ENCODE measurements at regions of chr10 and their contacts with region 1.

Region 1: DNA sequence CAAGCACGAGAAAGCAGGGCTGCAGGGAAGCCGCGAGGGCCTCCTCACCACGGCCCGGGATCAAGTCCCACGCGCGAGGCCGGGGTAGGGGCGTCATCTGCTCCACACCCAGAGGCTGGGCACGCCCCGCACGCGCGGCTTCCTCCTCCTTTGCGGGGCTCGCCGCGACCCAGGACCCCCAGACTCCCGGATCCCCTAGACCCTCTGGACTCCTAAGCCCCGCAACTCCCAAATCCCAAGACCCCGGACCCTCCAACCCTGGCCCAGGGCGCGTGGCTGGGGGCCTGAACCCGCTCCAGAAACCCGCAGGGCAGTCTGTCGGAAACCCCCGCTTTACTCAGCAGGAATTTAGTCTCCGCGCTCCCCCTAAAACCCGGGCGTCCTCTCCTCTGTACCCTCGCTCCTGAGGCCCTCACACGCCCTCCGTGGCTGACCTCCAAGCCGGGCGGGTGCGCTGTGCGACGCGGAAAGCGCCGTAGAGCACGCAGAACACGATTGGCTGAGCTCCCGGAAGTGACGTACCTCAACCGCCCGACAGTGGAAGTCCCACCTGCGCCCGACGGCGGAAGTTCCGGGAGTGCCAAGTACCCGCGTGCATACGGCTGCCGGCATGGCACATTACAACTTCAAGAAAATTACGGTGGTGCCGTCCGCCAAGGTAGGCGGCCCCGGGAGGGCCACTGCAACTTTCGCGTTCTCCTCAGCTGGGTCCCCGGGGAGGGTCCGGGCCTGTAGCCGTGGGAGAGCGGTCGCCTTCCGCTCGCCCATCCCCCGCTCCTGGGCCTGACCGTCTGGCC is at the start of gene GTPBP4:
- DNase-seq: peak; percentile 96 to 98 (median 98)
- H3K4me3 ChIP-seq: peak within 1 kb of the TSS; percentile 85 to 98 (median 90)
- H3K4me3 Mint-ChIP-seq: peak within 1 kb of the TSS; percentile 84 to 90
- H3K27ac ChIP-seq: peak within 1 kb of the TSS; percentile 75 to 97
- H3K27ac Mint-ChIP-seq: peak within 1 kb of the TSS; percentile 91 to 96 (median 92)
- H3K4me1 ChIP-seq: peaks cover 22 to 29% of the 10 kb centered on the region in 2 donors
- H3K4me1 Mint-ChIP-seq: peaks cover 27% of the 10 kb centered on the region
- H3K27me3 ChIP-seq: no peaks in the 10 kb centered on the region
- H3K27me3 Mint-ChIP-seq: peaks cover 0 to 2% (median 0%) of the 10 kb centered on the region in 3 donors
- CTCF ChIP-seq: peak; percentile 11
- polyA plus RNA-seq, gene GTPBP4: 9.9 to 16.1 (median 12.2) TPM

Region 2: DNA sequence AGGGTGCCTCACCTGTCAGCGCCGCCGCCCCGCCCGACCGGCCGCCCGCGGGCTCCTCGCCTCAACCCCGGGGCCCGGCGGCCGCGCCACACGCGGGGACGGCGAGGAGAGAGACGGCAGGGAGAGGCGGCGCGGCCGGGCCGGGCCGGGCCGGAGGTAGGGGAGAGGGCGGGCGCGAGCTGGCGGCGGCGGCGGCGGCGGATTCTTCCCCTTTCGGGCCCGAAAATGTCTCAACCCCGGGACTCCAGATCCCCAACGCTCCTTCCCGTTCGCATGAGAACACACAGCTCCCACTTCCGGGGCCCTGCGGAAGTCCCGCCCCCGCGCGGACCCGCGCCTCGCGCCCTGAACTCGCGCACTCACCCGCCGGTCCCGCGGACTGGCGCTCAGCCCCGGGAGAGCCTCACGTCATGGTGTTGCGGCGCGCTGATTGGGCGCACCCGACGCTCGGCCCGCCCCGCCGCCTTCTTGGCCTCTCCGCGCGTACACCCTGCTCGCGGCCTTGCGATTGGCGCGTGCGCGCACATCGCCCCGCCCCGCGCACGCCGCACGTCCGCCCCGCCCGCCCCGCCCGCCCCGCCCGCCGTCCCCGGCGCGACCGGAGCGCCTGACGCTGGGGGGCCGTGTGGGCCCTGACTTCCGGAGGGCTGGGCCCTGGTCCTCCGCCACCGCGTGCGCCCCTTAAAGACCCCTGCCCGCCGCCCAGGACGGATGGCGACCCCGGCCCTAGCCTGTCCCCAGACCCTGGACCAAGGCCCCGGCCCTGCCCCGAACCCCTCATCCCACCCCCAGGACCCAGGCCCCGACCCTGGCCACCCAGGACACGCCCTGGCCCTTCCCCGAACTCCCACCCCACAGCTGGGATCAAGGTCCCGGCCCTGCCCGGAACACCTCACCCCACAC is 56.4 kb before region 1 on chr10 and contains the start of gene LARP4B:
- intact Hi-C with region 1: loop called (anchors 2 to 5 kb)
- DNase-seq: peak; percentile 98 to 99 (median 99)
- H3K4me3 ChIP-seq: peak within 1 kb of the TSS; percentile 87 to 99 (median 90)
- H3K4me3 Mint-ChIP-seq: peak within 1 kb of the TSS; percentile 91 to 98
- H3K27ac ChIP-seq: peak within 1 kb of the TSS; percentile 91 to 97
- H3K27ac Mint-ChIP-seq: peak within 1 kb of the TSS; percentile 95 to 97 (median 96)
- H3K4me1 ChIP-seq: peaks cover 23% of the 10 kb centered on the region in 2 donors
- H3K4me1 Mint-ChIP-seq: peaks cover 32% of the 10 kb centered on the region
- H3K27me3 ChIP-seq: no peaks in the 10 kb centered on the region
- H3K27me3 Mint-ChIP-seq: peaks cover 0 to 3% (median 2%) of the 10 kb centered on the region in 3 donors
- CTCF ChIP-seq: no peak
- polyA plus RNA-seq, gene LARP4B: 17.2 to 52.3 (median 33.0) TPM

Region 3: GRCh38 chr10:1043532-1043995 is 55.5 kb after region 1 on chr10:
- intact Hi-C with region 1: loop called in 1 of 2 experiments (anchors 5 kb)
- DNase-seq: peak; percentile 61 to 65 (median 63)
- H3K4me3 ChIP-seq: peak overlapping the region; percentile 30 to 94 (median 78)
- H3K4me3 Mint-ChIP-seq: peak overlapping the region; percentile 86 to 97
- H3K27ac ChIP-seq: peak overlapping the region; percentile 71 to 86
- H3K27ac Mint-ChIP-seq: peak overlapping the region; percentile 94 to 99 (median 99)
- H3K4me1 ChIP-seq: peaks cover 37 to 56% of the 10 kb centered on the region in 2 donors
- H3K4me1 Mint-ChIP-seq: peaks cover 41% of the 10 kb centered on the region
- H3K27me3 ChIP-seq: no peaks in the 10 kb centered on the region
- H3K27me3 Mint-ChIP-seq: no peaks in the 10 kb centered on the region
- CTCF ChIP-seq: no peak

Region 4: GRCh38 chr10:1048732-1049424 is 60.8 kb after region 1 on chr10 and contains the start of gene IDI1:
- intact Hi-C with region 1: loop called (anchors 5 kb)
- DNase-seq: peak; percentile 96 to 98 (median 96)
- H3K4me3 ChIP-seq: peak within 1 kb of the TSS; percentile 77 to 94 (median 87)
- H3K4me3 Mint-ChIP-seq: peak within 1 kb of the TSS; percentile 91 to 94
- H3K27ac ChIP-seq: peak within 1 kb of the TSS; percentile 98 to 100
- H3K27ac Mint-ChIP-seq: peak within 1 kb of the TSS; percentile 98 to 100 (median 99)
- H3K4me1 ChIP-seq: peaks cover 37 to 62% of the 10 kb centered on the region in 2 donors
- H3K4me1 Mint-ChIP-seq: peaks cover 54% of the 10 kb centered on the region
- H3K27me3 ChIP-seq: no peaks in the 10 kb centered on the region
- H3K27me3 Mint-ChIP-seq: no peaks in the 10 kb centered on the region
- CTCF ChIP-seq: no peak
- polyA plus RNA-seq, gene IDI1: 35.0 to 139 (median 46.9) TPM

Region 5: GRCh38 chr10:1056326-1057105 is 68.4 kb after region 1 on chr10 and contains the start of gene WDR37:
- intact Hi-C with region 1: loop called (anchors 5 kb)
- DNase-seq: peak; percentile 78 to 84 (median 80)
- H3K4me3 ChIP-seq: peak within 1 kb of the TSS; percentile 95 to 98 (median 96)
- H3K4me3 Mint-ChIP-seq: peak within 1 kb of the TSS; percentile 92 to 95
- H3K27ac ChIP-seq: peak within 1 kb of the TSS; percentile 96 to 98
- H3K27ac Mint-ChIP-seq: peak within 1 kb of the TSS; percentile 98 to 99 (median 99)
- H3K4me1 ChIP-seq: peaks cover 25 to 38% of the 10 kb centered on the region in 2 donors
- H3K4me1 Mint-ChIP-seq: peaks cover 65% of the 10 kb centered on the region
- H3K27me3 ChIP-seq: no peaks in the 10 kb centered on the region
- H3K27me3 Mint-ChIP-seq: peaks cover 0 to 1% (median 0%) of the 10 kb centered on the region in 3 donors
- CTCF ChIP-seq: no peak
- polyA plus RNA-seq, gene WDR37: 7.1 to 33.6 (median 8.6) TPM